Thyroid gland (tissue), 4 donors: ENCODE measurements at regions of chr9 and their contacts with region 1.

Region 1: GRCh38 chr9:124776954-124777665 is at the start of gene OLFML2A:
- DNase-seq: peak; percentile 45 to 46
- H3K4me3 ChIP-seq: peak within 1 kb of the TSS; percentile 58 to 71 (median 60)
- H3K27ac ChIP-seq: peak within 1 kb of the TSS; percentile 90 to 95 (median 94)
- H3K4me1 ChIP-seq: peaks cover 42 to 48% of the 10 kb centered on the region in 2 donors
- H3K27me3 ChIP-seq: no peaks in the 10 kb centered on the region
- CTCF ChIP-seq: peak in 3 of 6 experiments; percentile 42 to 51 (median 50)
- POLR2A ChIP-seq: peak in 1 of 2 donors; percentile 71
- total RNA-seq, gene OLFML2A: 40.7 to 64.3 (median 50.2) TPM

Region 2: GRCh38 chr9:124839612-124840299 is 62.6 kb after region 1 on chr9:
- intact Hi-C with region 1: loop called (anchors 5 kb)
- DNase-seq: no peak
- H3K4me3 ChIP-seq: no peak overlapping the region
- H3K27ac ChIP-seq: no peak overlapping the region
- H3K4me1 ChIP-seq: peaks cover 13 to 34% of the 10 kb centered on the region in 2 donors
- H3K27me3 ChIP-seq: no peaks in the 10 kb centered on the region
- CTCF ChIP-seq: peak in 4 of 6 experiments; percentile 21 to 42 (median 24)
- POLR2A ChIP-seq: no peak